ENCODE measurements at regions of chr5 and their contacts with region 1.

Region 1: DNA sequence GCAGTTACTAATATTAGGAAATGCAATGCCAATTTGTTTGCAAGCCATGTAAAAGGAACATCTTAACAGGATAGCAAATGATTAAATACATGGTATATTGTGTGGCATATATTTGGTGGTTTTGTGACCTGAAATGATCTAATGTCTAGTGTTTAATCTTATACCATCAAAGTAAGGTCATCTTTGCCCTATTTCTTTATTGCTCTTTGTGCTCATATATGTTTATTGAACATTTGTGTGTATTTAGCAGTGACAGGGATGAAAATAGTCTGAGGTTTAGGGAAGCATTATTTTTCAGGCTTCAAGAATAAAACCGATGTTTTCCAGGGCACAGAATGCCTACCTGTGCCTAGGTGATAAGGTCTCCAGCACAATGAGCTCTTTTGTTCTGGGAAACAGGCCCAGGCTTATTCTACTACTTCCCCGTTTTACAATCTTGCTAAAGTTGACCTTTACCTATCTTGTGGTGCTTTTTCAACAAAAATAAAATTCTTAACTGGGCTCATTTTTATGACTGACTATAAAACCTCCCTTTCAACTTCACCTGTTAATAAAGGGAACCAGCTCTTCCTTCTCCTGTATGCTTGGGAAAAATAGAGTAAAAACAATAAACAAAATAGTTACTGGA is 105.6 kb upstream of the ANKH start:
- DNase-seq: peak; percentile 65
- H3K4me3 ChIP-seq: no peak overlapping the region
- H3K27ac ChIP-seq: peak overlapping the region; percentile 12
- H3K4me1 ChIP-seq: peaks cover 11% of the 10 kb centered on the region
- H3K27me3 ChIP-seq: no peaks in the 10 kb centered on the region
- CTCF ChIP-seq: no peak

Region 2: GRCh38 chr5:14720236-14720971 is 256.8 kb before region 1 on chr5:
- CTCF ChIA-PET with region 1: no interaction called
- dilution Hi-C with region 1: loop called (anchors 5 kb)
- in situ Hi-C with region 1: no loop called
- intact Hi-C with region 1: no loop called
- DNase-seq: no peak
- H3K4me3 ChIP-seq: no peak overlapping the region
- H3K27ac ChIP-seq: no peak overlapping the region
- H3K4me1 ChIP-seq: no peaks in the 10 kb centered on the region
- H3K27me3 ChIP-seq: no peaks in the 10 kb centered on the region
- CTCF ChIP-seq: no peak

Region 3: GRCh38 chr5:14882658-14883580 is 94.3 kb before region 1 on chr5:
- CTCF ChIA-PET with region 1: no interaction called
- dilution Hi-C with region 1: no loop called
- in situ Hi-C with region 1: no loop called
- intact Hi-C with region 1: no loop called
- DNase-seq: no peak
- H3K4me3 ChIP-seq: no peak overlapping the region
- H3K27ac ChIP-seq: no peak overlapping the region
- H3K4me1 ChIP-seq: peaks cover 28% of the 10 kb centered on the region
- H3K27me3 ChIP-seq: no peaks in the 10 kb centered on the region
- CTCF ChIP-seq: no peak

Region 4: GRCh38 chr5:14900731-14901461 is 76.3 kb before region 1 on chr5:
- CTCF ChIA-PET with region 1: no interaction called
- dilution Hi-C with region 1: loop called (anchors 5 kb)
- in situ Hi-C with region 1: no loop called
- intact Hi-C with region 1: no loop called
- DNase-seq: no peak
- H3K4me3 ChIP-seq: no peak overlapping the region
- H3K27ac ChIP-seq: no peak overlapping the region
- H3K4me1 ChIP-seq: peaks cover 12% of the 10 kb centered on the region
- H3K27me3 ChIP-seq: no peaks in the 10 kb centered on the region
- CTCF ChIP-seq: no peak

Region 5: GRCh38 chr5:15003511-15003920 is 26.3 kb after region 1 on chr5:
- CTCF ChIA-PET with region 1: no interaction called
- dilution Hi-C with region 1: no loop called
- in situ Hi-C with region 1: no loop called
- intact Hi-C with region 1: no loop called
- DNase-seq: peak; percentile 56
- H3K4me3 ChIP-seq: no peak overlapping the region
- H3K27ac ChIP-seq: no peak overlapping the region
- H3K4me1 ChIP-seq: peaks cover 9% of the 10 kb centered on the region
- H3K27me3 ChIP-seq: no peaks in the 10 kb centered on the region
- CTCF ChIP-seq: peak; percentile 77 to 79

Region 6: DNA sequence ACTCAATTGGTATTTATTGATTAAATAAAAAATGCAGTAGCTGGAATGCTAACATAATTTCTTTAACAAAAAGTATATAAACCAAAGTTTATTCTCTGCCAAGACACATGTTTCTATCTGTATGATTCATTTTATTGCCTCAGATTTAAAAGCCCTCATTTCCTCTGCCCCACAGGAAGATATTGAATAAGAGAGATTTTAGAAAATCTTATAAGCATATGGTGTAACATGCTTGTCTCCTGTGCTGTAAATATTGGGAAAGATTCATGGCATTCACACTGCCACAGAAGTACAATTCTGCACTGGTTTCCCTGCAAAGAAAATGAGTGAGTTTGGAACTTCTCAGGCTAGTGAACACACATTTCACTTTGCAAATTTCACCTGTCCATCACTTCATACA is 387.9 kb after region 1 on chr5:
- CTCF ChIA-PET with region 1: no interaction called
- dilution Hi-C with region 1: no loop called
- in situ Hi-C with region 1: no loop called
- intact Hi-C with region 1: no loop called
- DNase-seq: no peak
- H3K4me3 ChIP-seq: no peak overlapping the region
- H3K27ac ChIP-seq: no peak overlapping the region
- H3K4me1 ChIP-seq: no peaks in the 10 kb centered on the region
- H3K27me3 ChIP-seq: no peaks in the 10 kb centered on the region
- CTCF ChIP-seq: no peak